IMR-90 (cell line): ENCODE measurements at regions of chr4 and their contacts with region 1.

Region 1: DNA sequence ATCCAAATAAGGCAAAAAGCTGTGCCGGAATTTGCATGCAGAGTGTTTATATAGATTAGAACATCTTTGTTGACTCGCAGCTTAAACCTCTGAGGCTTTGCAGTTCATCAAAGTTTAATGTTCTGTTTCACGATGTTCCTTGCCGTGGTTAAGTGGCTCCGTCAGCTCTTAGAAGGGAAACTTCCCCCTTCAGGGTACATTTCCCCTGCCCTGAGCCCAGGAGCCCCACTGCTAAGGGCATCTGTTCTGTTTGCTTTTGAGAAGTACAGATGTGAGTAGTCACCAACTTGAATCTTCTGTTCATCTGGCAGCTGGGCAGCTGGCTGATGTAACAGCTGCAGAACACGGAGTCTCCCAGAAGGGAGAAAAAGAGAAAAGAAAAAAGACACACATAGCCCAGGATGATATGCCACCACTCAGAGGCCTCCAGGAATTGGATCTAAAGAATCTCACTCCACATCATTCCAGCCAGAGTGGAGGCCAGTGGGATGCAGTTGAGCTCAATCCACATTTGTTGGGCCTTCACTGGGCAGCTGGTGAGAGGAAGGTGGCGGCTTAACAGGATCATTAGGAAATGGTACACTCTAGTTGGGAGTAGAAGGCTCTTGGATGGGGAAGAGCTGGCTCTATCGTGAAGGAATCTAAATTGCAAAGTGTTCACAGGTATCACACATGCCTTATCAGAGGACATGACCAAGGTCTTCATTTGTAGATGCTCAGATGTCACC is 178.7 kb upstream of the RBPJ start:
- DNase-seq: peak; percentile 83
- ATAC-seq: peak; percentile 67
- H3K4me3 ChIP-seq: no peak overlapping the region
- H3K27ac ChIP-seq: peak overlapping the region; percentile 83
- H3K4me1 ChIP-seq: peaks cover 29% of the 10 kb centered on the region
- H3K27me3 ChIP-seq: no peaks in the 10 kb centered on the region
- CTCF ChIP-seq: no peak
- POLR2A ChIP-seq: no peak
- RAD21 ChIP-seq: 0 out of 2 replicates have a peak, but pooled peaks have one; percentile 5

Region 2: DNA sequence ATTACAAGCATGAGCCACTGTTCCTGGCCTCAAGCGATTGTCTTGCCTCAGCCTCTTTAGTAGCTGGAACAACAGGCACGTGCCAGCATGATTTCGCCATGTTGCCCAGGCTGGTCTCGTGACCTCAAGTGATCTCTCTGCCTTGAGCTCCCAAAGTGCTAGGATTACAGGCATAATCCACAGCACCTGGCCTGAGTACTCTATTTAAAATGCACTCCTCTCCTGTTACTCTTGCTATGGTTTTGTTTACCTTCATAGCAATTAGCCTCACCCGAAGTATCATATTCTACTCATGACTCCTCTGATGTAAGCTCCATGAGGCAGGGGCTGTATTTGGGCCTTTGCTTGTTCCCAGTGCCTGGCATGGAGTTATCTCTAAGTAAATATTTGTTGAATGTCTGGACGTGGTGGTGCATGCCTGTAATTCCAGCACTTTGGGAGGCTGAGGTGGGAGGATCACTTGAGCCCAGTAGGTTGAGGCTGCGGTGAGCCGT is 579.0 kb before region 1 on chr4:
- CTCF ChIA-PET with region 1: no interaction called
- POLR2A ChIA-PET with region 1: no interaction called
- dilution Hi-C with region 1: no loop called
- in situ Hi-C with region 1: no loop called
- intact Hi-C with region 1: no loop called
- DNase-seq: no peak
- ATAC-seq: no peak
- H3K4me3 ChIP-seq: no peak overlapping the region
- H3K27ac ChIP-seq: no peak overlapping the region
- H3K4me1 ChIP-seq: no peaks in the 10 kb centered on the region
- H3K27me3 ChIP-seq: no peaks in the 10 kb centered on the region
- CTCF ChIP-seq: no peak
- POLR2A ChIP-seq: no peak
- RAD21 ChIP-seq: no peak

Region 3: DNA sequence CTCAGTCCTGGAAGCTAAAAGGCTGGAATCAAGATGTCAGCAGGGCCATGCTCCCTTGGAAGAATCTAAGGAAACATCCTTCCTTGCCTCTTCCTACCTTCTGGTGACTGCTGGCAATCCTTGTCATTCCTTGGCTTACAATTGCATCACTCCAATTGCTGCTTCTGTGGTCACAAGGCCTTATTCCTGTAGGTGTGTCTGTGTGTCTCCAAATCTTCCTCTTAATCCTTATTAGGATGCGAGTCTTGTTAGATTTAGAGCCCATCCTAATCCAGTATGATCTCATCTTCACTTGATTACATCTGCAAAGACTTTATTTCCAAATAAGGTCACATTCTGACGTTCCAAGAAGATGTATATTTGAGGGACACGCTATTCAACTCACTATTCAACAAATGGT is 175.9 kb before region 1 on chr4:
- CTCF ChIA-PET with region 1: no interaction called
- POLR2A ChIA-PET with region 1: no interaction called
- dilution Hi-C with region 1: no loop called
- in situ Hi-C with region 1: no loop called
- intact Hi-C with region 1: no loop called
- DNase-seq: peak; percentile 77
- ATAC-seq: peak; percentile 61
- H3K4me3 ChIP-seq: no peak overlapping the region
- H3K27ac ChIP-seq: peak overlapping the region; percentile 54
- H3K4me1 ChIP-seq: no peaks in the 10 kb centered on the region
- H3K27me3 ChIP-seq: no peaks in the 10 kb centered on the region; the same call in 1 of the 2 replicates
- CTCF ChIP-seq: no peak
- POLR2A ChIP-seq: no peak
- RAD21 ChIP-seq: no peak

Region 4: DNA sequence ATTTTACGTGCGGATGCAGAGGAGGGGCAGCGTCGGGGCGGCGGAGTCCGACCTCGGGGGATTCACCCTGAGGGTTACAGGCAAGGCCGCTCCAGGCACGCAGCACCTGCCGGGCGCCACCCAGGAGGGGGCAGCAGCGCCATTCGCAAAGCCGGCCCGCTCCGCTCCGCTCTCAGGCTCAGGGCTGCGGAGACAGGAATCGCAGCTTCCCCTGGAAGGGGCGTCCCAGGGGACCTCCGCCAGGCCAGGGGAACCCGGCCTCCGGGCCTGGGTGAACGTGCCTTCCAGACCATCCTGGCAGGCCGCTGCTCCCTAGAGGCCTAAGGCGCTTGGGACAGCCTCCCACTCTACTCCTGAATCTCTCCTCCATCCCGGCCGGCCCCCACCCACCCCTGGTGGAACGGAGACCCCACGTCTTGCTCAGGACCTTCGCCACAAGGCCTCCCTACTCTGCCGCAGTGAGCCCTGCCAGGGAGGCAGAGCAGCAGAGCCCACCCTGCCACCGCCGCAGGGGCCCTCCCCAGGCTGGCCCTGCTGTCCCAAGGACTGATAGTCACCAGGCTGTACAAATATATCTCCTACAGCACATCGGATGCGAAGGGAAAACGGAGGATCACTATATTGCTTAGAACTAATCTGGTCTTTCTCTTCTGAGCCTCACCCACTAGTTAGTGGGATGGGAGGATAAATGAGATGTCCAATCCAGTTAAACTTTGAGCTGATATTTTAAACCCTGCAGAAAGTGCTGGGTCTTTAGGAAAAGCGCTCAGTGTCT is 113.1 kb before region 1 on chr4:
- CTCF ChIA-PET with region 1: interaction called, 3 read pairs
- POLR2A ChIA-PET with region 1: no interaction called
- dilution Hi-C with region 1: no loop called
- in situ Hi-C with region 1: no loop called
- intact Hi-C with region 1: loop called (anchors 5 kb)
- DNase-seq: peak; percentile 58
- ATAC-seq: peak; percentile 79
- H3K4me3 ChIP-seq: no peak overlapping the region
- H3K27ac ChIP-seq: no peak overlapping the region
- H3K4me1 ChIP-seq: peaks cover 19% of the 10 kb centered on the region
- H3K27me3 ChIP-seq: peaks cover 3% of the 10 kb centered on the region
- CTCF ChIP-seq: peak; percentile 77
- POLR2A ChIP-seq: no peak
- RAD21 ChIP-seq: peak; percentile 93

Region 5: DNA sequence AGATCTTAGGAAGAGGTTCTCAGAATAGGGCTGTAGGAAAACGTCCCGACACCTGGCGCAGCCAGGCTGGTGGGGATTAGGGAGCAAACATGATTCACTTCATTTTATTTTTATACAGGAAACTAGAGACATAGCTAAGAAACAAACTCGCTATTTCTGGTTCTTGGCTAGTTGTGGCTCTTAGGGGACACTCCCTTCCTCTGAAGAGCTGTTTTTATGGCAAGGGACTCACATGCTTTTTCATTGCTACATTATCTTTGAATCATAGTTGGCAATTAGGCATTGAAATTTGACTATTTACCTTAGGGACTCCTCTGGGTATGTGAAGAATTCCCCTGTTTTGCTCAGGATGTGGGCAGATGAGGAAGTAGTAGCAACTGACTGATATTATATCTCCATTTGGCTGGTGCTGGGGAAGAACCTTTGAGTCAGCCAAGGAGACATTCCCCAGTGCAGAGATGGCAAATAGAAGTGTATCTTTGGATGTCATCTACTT is 53.6 kb before region 1 on chr4:
- CTCF ChIA-PET with region 1: no interaction called
- POLR2A ChIA-PET with region 1: no interaction called
- dilution Hi-C with region 1: no loop called
- in situ Hi-C with region 1: no loop called
- intact Hi-C with region 1: loop called (anchors 2 kb)
- DNase-seq: peak; percentile 78
- ATAC-seq: peak; percentile 77
- H3K4me3 ChIP-seq: no peak overlapping the region
- H3K27ac ChIP-seq: peak overlapping the region; percentile 72; the same call in 1 of the 2 replicates
- H3K4me1 ChIP-seq: peaks cover 18% of the 10 kb centered on the region
- H3K27me3 ChIP-seq: no peaks in the 10 kb centered on the region
- CTCF ChIP-seq: no peak
- POLR2A ChIP-seq: no peak
- RAD21 ChIP-seq: no peak

Region 6: DNA sequence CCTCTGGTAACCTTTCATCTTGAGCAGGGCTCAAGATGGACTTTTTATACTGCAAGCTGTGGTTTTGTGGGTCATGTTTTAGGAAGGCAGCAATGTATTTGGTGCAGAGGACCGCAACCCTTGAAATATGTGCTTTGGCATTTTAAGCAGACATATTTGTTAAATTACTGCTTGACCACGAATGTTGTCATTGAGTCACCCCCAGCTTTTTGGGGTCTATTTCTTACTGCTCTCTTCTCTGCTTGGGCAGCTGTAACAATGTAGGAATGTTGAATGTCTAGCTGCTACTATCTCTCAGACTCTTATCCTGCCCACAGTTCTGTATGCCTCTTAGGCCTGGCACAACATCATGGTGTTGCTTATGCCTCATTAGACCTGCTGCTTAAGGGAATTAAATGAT is 184.7 kb after region 1 on chr4:
- CTCF ChIA-PET with region 1: no interaction called
- POLR2A ChIA-PET with region 1: no interaction called
- dilution Hi-C with region 1: no loop called
- in situ Hi-C with region 1: no loop called
- intact Hi-C with region 1: no loop called
- DNase-seq: peak; percentile 95
- ATAC-seq: peak; percentile 78
- H3K4me3 ChIP-seq: no peak overlapping the region
- H3K27ac ChIP-seq: no peak overlapping the region
- H3K4me1 ChIP-seq: peaks cover 14% of the 10 kb centered on the region
- H3K27me3 ChIP-seq: no peaks in the 10 kb centered on the region
- CTCF ChIP-seq: no peak
- POLR2A ChIP-seq: no peak
- RAD21 ChIP-seq: 0 out of 2 replicates have a peak, but pooled peaks have one; percentile 6

Region 7: GRCh38 chr4:26583865-26584652 is 442.0 kb after region 1 on chr4 and contains the start of gene TBC1D19:
- CTCF ChIA-PET with region 1: no interaction called
- POLR2A ChIA-PET with region 1: interaction called, 11 read pairs
- dilution Hi-C with region 1: no loop called
- in situ Hi-C with region 1: no loop called
- intact Hi-C with region 1: no loop called
- DNase-seq: peak; percentile 85
- ATAC-seq: peak; percentile 99
- H3K4me3 ChIP-seq: peak within 1 kb of the TSS; percentile 76
- H3K27ac ChIP-seq: peak within 1 kb of the TSS; percentile 69
- H3K4me1 ChIP-seq: no peaks in the 10 kb centered on the region
- H3K27me3 ChIP-seq: no peaks in the 10 kb centered on the region
- CTCF ChIP-seq: peak; percentile 4; the same call in 1 of the 2 replicates
- POLR2A ChIP-seq: no peak
- RAD21 ChIP-seq: peak; percentile 33
- total RNA-seq, gene TBC1D19: 17.6 and 31.4 TPM in 2 replicates

Region 8: DNA sequence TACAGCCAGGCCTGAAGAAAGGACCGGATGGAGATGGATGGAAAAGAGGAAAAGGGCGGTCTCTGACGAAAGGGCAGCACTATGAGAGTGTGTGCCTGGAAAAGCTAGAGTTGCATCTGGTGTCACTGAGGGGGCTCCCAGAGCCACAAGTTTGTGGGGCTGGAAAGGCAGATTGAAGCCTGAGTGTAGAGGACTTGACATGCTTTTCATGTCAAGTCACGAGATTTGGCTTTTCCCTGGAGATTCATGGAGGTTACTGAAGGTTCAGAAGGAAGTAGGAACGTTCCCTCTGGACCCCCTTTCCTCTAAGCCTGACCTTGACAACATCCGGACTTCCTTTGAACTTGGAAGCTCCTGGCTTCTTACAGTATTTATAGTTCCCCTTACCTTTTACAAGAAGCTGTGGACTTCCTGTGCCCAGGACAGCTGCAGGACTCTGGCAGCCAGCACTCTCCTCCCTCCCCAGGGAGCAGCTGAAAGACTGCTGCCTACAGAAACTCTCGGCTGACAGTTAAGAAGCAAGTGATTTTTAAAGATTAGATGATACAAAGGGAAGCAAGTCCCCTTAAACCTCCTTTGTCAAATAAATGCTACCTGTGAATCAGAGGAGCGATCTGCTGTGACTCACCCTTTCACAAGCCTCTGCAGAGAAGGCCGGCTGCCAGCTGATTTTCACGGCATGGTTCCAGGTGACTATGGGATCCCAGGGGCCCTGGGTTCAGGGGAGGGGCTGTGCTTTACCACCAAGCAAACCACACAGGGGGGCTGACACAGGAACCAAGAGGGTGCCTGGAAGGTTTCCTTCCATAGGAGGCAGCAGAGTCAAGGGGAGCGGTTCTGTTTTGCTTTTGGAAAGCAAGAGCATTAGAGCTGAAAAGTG is 645.6 kb after region 1 on chr4:
- CTCF ChIA-PET with region 1: no interaction called
- POLR2A ChIA-PET with region 1: no interaction called
- dilution Hi-C with region 1: no loop called
- in situ Hi-C with region 1: no loop called
- intact Hi-C with region 1: no loop called
- DNase-seq: peak; percentile 76
- ATAC-seq: peak; percentile 54
- H3K4me3 ChIP-seq: no peak overlapping the region
- H3K27ac ChIP-seq: no peak overlapping the region
- H3K4me1 ChIP-seq: peaks cover 9% of the 10 kb centered on the region
- H3K27me3 ChIP-seq: no peaks in the 10 kb centered on the region
- CTCF ChIP-seq: no peak
- POLR2A ChIP-seq: no peak
- RAD21 ChIP-seq: peak; percentile 31